IMR-90 (cell line): ENCODE measurements at regions of chrX and their contacts with region 1.

Region 1: DNA sequence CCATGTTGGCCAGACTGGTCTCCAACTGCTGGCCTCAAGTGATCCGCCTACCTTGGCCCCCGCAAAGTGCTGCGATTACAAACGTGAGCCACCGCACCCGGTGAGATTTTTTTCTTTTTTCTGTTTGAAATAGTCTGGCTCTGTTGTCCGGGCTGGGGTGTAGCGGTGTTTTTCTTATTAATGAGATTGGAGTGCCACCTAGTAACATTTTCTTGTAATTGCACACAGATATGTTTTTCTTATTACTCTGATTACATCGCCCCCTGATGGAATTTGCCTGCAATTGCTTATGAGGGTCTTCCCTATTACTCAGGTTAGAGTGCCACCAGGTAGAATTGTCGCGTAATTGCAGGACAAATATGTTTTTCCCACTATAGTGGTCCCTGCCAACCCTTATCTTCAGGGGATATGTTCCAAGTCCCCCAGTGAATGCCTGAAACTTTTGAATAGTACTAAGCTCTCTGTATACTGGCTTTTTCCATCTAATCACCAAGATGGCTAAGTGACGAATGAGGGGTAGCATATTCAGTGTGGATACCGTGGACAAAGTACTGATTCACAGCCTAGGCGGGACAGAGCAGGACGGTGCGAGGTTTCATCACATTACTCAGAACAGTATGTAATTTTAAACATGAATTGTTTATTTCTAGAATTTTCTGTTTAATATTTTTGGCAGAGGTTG is 8.6 kb upstream of the PDHA1 start:
- DNase-seq: peak; percentile 19
- ATAC-seq: no peak
- H3K4me3 ChIP-seq: no peak overlapping the region
- H3K27ac ChIP-seq: no peak overlapping the region
- H3K4me1 ChIP-seq: no peaks in the 10 kb centered on the region
- H3K27me3 ChIP-seq: peaks cover 5% of the 10 kb centered on the region
- CTCF ChIP-seq: peak; percentile 58
- POLR2A ChIP-seq: no peak
- RAD21 ChIP-seq: peak; percentile 28

Region 2: GRCh38 chrX:18931972-18932371 is 403.1 kb before region 1 on chrX:
- CTCF ChIA-PET with region 1: interaction called, 12 read pairs
- POLR2A ChIA-PET with region 1: no interaction called
- dilution Hi-C with region 1: no loop called
- in situ Hi-C with region 1: loop called (anchors 5 kb)
- intact Hi-C with region 1: loop called (anchors 1 kb)
- DNase-seq: peak; percentile 30
- ATAC-seq: peak; percentile 71
- H3K4me3 ChIP-seq: no peak overlapping the region
- H3K27ac ChIP-seq: no peak overlapping the region
- H3K4me1 ChIP-seq: no peaks in the 10 kb centered on the region
- H3K27me3 ChIP-seq: no peaks in the 10 kb centered on the region
- CTCF ChIP-seq: peak; percentile 60
- POLR2A ChIP-seq: no peak
- RAD21 ChIP-seq: peak; percentile 73

Region 3: DNA sequence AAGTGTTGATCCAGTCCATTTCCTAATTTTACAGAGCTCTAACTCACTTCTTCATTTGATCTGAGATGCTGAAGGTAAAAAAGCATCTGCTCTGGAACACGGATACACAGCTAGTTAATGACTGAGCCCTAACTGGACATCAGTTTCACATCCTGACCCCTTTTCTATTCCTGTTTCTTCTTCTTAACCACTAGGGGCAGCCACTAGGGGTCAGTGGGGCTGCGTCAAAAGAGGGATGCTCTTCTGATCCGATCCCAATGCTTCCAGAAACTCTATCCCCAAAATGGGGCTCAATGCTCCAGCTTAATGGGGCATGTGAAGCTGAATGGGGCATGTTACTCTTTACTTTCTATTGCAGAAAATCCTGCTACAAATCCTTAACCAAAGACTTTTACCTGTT is 317.8 kb before region 1 on chrX:
- CTCF ChIA-PET with region 1: interaction called, 3 read pairs
- POLR2A ChIA-PET with region 1: no interaction called
- dilution Hi-C with region 1: no loop called
- in situ Hi-C with region 1: no loop called
- intact Hi-C with region 1: loop called (anchors 5 kb)
- DNase-seq: peak; percentile 17
- ATAC-seq: peak; percentile 63
- H3K4me3 ChIP-seq: no peak overlapping the region
- H3K27ac ChIP-seq: no peak overlapping the region
- H3K4me1 ChIP-seq: no peaks in the 10 kb centered on the region
- H3K27me3 ChIP-seq: no peaks in the 10 kb centered on the region
- CTCF ChIP-seq: peak; percentile 51
- POLR2A ChIP-seq: no peak
- RAD21 ChIP-seq: peak; percentile 48

Region 4: GRCh38 chrX:19382555-19383145 is 47.6 kb after region 1 on chrX:
- CTCF ChIA-PET with region 1: no interaction called
- POLR2A ChIA-PET with region 1: no interaction called
- dilution Hi-C with region 1: no loop called
- in situ Hi-C with region 1: no loop called
- intact Hi-C with region 1: no loop called
- DNase-seq: peak; percentile 32
- ATAC-seq: peak; percentile 83
- H3K4me3 ChIP-seq: no peak overlapping the region
- H3K27ac ChIP-seq: no peak overlapping the region
- H3K4me1 ChIP-seq: no peaks in the 10 kb centered on the region
- H3K27me3 ChIP-seq: peaks cover 2% of the 10 kb centered on the region; the same call in 1 of the 2 replicates
- CTCF ChIP-seq: peak; percentile 51
- POLR2A ChIP-seq: no peak
- RAD21 ChIP-seq: peak; percentile 38

Region 5: DNA sequence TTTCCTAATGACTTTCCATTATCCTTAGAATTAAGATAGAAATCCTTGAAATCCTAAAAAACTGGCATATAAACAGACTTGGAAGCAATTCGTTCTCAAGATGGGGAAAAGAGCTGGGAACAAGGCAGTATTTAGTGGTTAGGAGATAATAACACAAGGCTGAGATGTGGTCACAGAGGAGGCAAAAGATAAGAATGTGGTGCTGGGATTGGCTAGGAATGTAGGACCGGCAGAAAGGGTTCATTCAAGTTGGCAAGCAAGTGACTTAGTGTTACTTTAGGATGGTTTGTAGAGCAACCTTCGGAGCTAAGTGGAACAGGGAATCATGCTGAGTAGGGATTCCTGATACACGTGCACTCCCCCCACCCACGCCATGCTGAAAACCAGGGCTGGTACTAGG is 1053.5 kb after region 1 on chrX:
- CTCF ChIA-PET with region 1: no interaction called
- POLR2A ChIA-PET with region 1: no interaction called
- dilution Hi-C with region 1: no loop called
- in situ Hi-C with region 1: no loop called
- intact Hi-C with region 1: no loop called
- DNase-seq: no peak
- ATAC-seq: no peak
- H3K4me3 ChIP-seq: no peak overlapping the region
- H3K27ac ChIP-seq: no peak overlapping the region
- H3K4me1 ChIP-seq: no peaks in the 10 kb centered on the region
- H3K27me3 ChIP-seq: no peaks in the 10 kb centered on the region; the same call in 1 of the 2 replicates
- CTCF ChIP-seq: no peak
- POLR2A ChIP-seq: no peak
- RAD21 ChIP-seq: no peak